ENCODE measurements at regions of chrX and their contacts with region 1.

Region 1: DNA sequence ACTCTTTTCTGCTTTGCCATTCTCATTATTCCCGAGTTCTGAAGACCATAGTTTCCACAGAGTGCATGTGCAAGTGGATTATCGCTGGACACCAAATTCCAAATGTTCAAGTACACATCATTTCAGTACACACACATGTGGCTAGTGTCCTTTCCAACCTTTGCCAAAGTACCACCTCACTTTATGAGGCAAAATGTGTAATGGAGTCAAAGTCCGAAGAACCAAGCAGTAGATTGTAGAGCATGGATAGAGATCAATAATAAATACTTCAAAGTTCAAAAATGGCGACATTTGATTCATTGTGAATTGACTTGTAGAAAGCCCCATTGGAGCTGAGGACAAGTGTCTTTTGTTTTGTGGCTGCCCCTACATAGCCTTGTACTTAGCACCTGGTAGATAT is 115.6 kb downstream of the TMEM164 start:
- DNase-seq: no peak
- H3K4me3 ChIP-seq: no peak overlapping the region
- H3K27ac ChIP-seq: no peak overlapping the region
- H3K27me3 ChIP-seq: peaks cover 0 to 41% (median 8%) of the 10 kb centered on the region in 45 donors
- CTCF ChIP-seq: no peak

Region 2: GRCh38 chrX:109684136-109684535 is 434.4 kb before region 1 on chrX:
- intact Hi-C with region 1: no loop called
- DNase-seq: no peak
- H3K4me3 ChIP-seq: no peak overlapping the region
- H3K27ac ChIP-seq: no peak overlapping the region
- H3K27me3 ChIP-seq: peaks cover 0 to 71% (median 12%) of the 10 kb centered on the region in 45 donors
- CTCF ChIP-seq: no peak

Region 3: GRCh38 chrX:109927663-109928273 is 190.8 kb before region 1 on chrX:
- intact Hi-C with region 1: no loop called
- DNase-seq: peak in 4 of 10 donors; percentile 13 to 42 (median 37)
- H3K4me3 ChIP-seq: no peak overlapping the region
- H3K27ac ChIP-seq: peak overlapping the region in 12 of 59 donors; percentile 1 to 51 (median 34)
- H3K27me3 ChIP-seq: peaks cover 0 to 71% (median 9%) of the 10 kb centered on the region in 45 donors
- CTCF ChIP-seq: no peak

Region 4: DNA sequence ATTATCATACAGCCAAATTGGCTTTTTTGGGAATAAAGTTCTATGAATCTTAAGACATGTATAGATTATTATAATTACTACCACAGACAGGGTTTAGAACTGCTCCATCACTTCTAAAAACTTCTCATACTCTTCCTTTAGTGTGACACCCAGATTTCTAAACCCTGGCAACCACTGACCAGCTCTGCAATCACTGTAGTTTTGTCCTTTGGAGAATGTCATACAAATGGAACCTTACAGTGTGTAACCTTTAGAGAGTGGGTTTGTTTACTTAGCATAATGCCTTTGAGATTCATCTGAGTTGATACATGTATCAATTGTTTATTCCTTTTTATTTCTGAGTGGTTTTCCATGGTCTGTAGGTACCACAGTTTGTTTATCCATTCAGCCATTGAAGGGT is 20.6 kb before region 1 on chrX:
- intact Hi-C with region 1: loop called in 1 of 2 experiments (anchors 1 kb)
- DNase-seq: no peak
- H3K4me3 ChIP-seq: no peak overlapping the region
- H3K27ac ChIP-seq: no peak overlapping the region
- H3K27me3 ChIP-seq: peaks cover 0 to 47% (median 5%) of the 10 kb centered on the region in 45 donors
- CTCF ChIP-seq: no peak

Region 5: GRCh38 chrX:111280196-111280595 is 1161.7 kb after region 1 on chrX:
- intact Hi-C with region 1: no loop called
- DNase-seq: no peak
- H3K4me3 ChIP-seq: no peak overlapping the region
- H3K27ac ChIP-seq: no peak overlapping the region
- H3K27me3 ChIP-seq: peaks cover 0 to 90% (median 22%) of the 10 kb centered on the region in 45 donors
- CTCF ChIP-seq: no peak